ENCODE measurements at regions of chr2 and their contacts with region 1.

Region 1: DNA sequence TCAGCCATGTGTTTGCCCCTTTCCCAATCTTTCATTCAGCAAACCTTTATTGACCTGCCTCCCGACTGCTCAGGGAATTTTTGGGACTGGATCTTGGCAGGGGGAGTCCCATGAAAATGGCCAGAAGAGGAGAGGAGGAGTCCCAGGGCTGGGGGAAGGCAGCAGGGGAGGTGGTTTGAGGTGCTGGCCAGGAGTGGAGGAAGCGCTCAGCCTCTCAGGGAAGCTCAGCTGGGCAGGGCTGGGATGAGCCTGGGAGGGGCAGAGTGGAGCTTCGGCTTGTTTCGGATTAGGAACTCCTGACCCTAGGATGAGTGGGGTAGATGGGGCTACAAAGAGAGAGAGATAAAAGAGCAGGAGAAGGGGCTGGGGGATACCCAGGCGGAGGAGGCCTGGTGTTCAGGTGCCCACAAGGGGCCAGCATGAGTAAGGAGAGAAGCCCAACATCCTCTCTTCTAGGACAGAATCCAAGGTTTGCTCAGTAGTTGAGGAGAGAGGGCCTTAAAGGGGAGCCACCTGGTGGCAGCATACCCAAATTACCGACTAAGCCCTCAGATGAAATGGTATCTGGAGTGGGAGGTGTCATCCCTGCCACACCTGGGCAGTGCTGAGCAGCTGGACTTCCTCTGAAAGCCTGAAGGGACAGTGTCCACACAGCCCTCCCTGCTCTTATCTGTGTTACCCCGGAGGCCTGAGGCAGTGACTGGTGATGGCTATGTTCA is 91.1 kb downstream of the INHBB start:
- DNase-seq: no peak
- H3K4me3 ChIP-seq: no peak overlapping the region
- H3K27me3 ChIP-seq: peaks cover 6% of the 10 kb centered on the region
- CTCF ChIP-seq: peak; percentile 56

Region 2: DNA sequence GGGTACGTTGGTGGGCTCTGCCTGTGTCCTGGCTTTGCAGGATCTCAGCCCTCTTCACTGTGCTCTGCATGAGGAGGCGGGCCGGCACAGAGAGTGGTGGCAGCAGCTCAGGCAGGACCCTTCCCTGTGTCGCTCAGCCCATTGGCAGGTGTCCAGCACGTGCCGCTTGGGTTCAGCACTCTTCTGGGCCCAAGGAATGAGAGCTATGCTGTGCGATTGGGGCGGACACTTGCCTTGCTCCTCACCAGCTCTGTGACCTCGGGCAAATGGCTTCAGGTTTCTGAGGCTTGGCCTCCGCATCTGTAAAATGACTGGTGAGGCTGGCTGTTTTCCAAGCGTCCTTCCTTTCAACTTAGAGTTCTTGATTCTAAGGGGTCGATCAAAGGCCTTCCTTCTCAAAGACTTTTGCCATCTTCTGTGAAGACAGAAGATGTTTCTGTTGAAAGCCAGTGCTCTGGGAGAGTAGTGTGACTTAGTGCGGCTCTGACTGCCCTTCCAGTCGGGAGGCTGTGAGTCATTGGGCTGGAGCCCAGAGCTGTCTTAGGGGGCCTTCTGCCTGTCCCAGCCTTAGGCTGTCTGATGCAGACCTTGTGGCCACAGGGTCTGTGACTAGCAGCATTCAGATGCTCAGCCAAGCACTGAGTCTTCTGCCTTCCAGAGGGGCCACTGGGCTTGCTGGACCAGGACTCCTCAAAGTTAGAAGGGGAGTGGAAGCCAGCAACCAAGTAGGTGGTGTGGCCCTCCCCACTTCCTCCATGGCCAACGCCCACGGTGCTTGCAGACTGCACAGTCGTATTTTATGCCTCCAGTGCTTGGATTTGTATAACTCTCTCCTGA is 334.3 kb after region 1 on chr2:
- CTCF ChIA-PET with region 1: no interaction called
- POLR2A ChIA-PET with region 1: no interaction called
- DNase-seq: peak; percentile 75
- H3K4me3 ChIP-seq: no peak overlapping the region
- H3K27me3 ChIP-seq: no peaks in the 10 kb centered on the region
- CTCF ChIP-seq: no peak

Region 3: GRCh38 chr2:120809609-120810440 is 372.8 kb after region 1 on chr2:
- CTCF ChIA-PET with region 1: no interaction called
- POLR2A ChIA-PET with region 1: interaction called, 22 read pairs
- DNase-seq: no peak
- H3K4me3 ChIP-seq: no peak overlapping the region
- H3K27me3 ChIP-seq: no peaks in the 10 kb centered on the region
- CTCF ChIP-seq: no peak

Region 4: DNA sequence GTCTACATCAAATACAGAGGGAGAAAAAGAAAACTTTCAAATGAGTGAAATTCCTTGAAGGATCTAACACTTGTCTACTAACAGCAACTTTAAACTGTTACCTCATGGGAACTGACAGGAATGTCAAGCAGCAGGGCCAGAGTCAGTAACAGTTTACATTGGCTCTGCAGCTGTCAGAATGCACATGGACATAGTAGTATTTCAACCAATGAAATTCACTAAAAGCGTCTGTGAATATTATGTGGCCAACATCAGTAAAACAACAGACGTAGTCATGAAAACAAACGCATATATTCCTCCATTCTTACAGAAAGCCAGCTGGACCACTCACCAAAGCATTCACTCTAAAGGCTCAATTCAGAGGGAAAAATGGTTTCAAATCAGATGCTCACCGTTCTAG is 1014.4 kb after region 1 on chr2:
- CTCF ChIA-PET with region 1: no interaction called
- POLR2A ChIA-PET with region 1: no interaction called
- DNase-seq: no peak
- H3K4me3 ChIP-seq: no peak overlapping the region
- H3K27me3 ChIP-seq: no peaks in the 10 kb centered on the region
- CTCF ChIP-seq: no peak